Activated B cell treated with CpG ODN at 0.5 μM for 24 hours (primary cell): ENCODE measurements at regions of chr18 and their contacts with region 1.

Region 1: DNA sequence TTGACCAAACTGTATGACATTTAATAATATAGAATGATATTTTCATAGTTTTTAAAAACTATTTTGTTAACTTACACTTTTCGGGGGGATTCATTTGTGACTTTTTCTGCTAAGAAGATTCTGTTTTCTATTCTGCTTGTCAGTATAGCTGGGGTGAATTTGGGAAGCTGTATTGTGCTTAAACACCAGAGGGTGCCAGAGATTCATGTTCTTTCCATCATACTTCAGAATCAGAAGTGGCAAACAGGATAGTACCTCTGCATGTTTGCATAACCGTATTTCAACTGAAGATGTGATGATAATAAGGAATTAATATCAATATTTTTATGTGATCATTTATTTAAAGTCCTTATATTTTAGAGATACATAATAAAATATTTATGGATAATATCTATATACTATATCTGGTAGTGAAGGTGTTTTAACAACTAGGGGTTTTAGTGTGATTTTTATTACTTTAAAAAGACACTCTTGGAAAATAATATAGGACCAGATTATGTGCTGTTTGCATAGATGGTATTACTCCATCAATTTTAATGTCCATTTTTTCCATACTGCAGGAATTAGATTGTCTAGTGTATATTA is 81.0 kb downstream of the TAF4B start:
- DNase-seq: no peak
- ATAC-seq: peak; percentile 42
- H3K4me3 Mint-ChIP-seq: no peak overlapping the region
- H3K27ac Mint-ChIP-seq: no peak overlapping the region
- H3K4me1 Mint-ChIP-seq: no peaks in the 10 kb centered on the region
- H3K27me3 Mint-ChIP-seq: no peaks in the 10 kb centered on the region
- CTCF ChIP-seq: no peak

Region 2: DNA sequence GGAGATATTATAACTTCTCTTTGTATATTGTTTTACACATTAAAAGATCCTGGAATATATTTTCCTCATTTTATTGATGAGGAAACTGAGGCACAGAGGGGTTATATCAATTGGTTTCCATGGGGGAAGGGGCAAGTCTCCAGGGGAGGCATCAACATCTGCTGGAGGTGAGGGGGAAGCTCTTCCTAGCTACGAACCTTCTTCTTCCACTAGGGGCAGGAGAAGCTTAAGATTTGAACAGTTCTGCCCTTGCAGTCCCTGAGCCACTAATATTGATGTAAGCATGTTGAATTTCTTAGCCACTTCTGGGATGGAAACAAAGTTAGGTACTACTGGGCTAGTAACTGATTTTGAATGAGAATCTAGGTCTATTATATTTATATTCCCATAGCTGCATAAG is 698.3 kb after region 1 on chr18:
- CTCF ChIA-PET with region 1: no interaction called
- POLR2A ChIA-PET with region 1: no interaction called
- intact Hi-C with region 1: loop called (anchors 5 kb)
- DNase-seq: no peak
- ATAC-seq: no peak
- H3K4me3 Mint-ChIP-seq: no peak overlapping the region
- H3K27ac Mint-ChIP-seq: no peak overlapping the region
- H3K4me1 Mint-ChIP-seq: no peaks in the 10 kb centered on the region
- H3K27me3 Mint-ChIP-seq: peaks cover 4% of the 10 kb centered on the region
- CTCF ChIP-seq: no peak